Activated B cell treated with CpG ODN at 0.5 μM for 24 hours (primary cell): ENCODE measurements at regions of chr4 and their contacts with region 1.

Region 1: GRCh38 chr4:75653845-75654503 is 19.2 kb downstream of the G3BP2 start:
- DNase-seq: no peak
- ATAC-seq: no peak
- H3K4me3 Mint-ChIP-seq: no peak overlapping the region
- H3K27ac Mint-ChIP-seq: no peak overlapping the region
- H3K4me1 Mint-ChIP-seq: peaks cover 31% of the 10 kb centered on the region
- H3K27me3 Mint-ChIP-seq: no peaks in the 10 kb centered on the region
- CTCF ChIP-seq: no peak

Region 2: DNA sequence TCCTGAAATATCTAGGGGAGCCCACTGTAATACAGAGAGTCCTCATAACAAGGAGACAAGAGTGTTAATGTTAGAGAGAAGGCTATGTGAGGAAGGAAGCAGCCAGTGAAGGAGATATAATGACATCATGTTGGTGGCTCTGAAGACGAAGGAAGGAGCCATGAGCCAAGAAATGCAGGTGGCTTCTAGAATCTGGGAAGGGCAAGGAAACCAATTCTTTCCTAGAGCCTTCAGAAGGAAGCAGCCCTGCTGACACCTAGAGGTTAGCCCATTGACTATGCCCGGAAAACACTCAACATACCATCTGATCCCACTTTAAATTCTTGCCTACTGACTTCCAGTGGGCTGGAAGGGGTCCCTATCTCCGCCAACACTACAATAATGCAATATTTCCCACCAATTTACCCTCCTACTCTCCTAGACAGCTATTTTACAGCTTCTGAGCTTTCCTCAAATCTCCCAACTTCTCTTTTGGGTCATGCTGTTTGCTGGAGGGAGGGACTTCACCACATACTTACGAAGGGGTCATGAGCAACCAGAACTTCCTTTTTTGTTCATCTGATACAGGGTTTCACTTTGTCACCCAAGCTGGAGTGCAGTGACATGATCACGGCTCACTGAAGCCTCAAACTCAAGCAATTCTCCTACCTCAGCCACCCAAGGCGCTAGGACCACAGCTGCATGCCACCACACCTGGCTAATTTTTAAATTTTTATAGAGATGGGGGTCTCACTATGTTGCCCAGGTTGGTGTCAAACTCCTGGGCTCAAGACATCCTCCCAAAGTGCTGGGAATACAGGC is 44.4 kb after region 1 on chr4:
- CTCF ChIA-PET with region 1: no interaction called
- POLR2A ChIA-PET with region 1: no interaction called
- intact Hi-C with region 1: loop called (anchors 2 kb)
- DNase-seq: peak; percentile 21
- ATAC-seq: peak; percentile 96
- H3K4me3 Mint-ChIP-seq: peak overlapping the region; percentile 44
- H3K27ac Mint-ChIP-seq: peak overlapping the region; percentile 90
- H3K4me1 Mint-ChIP-seq: peaks cover 38% of the 10 kb centered on the region
- H3K27me3 Mint-ChIP-seq: no peaks in the 10 kb centered on the region
- CTCF ChIP-seq: no peak

Region 3: GRCh38 chr4:75708218-75708691 is 54.3 kb after region 1 on chr4:
- CTCF ChIA-PET with region 1: interaction called, 30 read pairs
- POLR2A ChIA-PET with region 1: no interaction called
- intact Hi-C with region 1: loop called (anchors 1 kb)
- DNase-seq: no peak
- ATAC-seq: peak; percentile 85
- H3K4me3 Mint-ChIP-seq: no peak overlapping the region
- H3K27ac Mint-ChIP-seq: peak overlapping the region; percentile 21
- H3K4me1 Mint-ChIP-seq: peaks cover 12% of the 10 kb centered on the region
- H3K27me3 Mint-ChIP-seq: no peaks in the 10 kb centered on the region
- CTCF ChIP-seq: no peak

Region 4: DNA sequence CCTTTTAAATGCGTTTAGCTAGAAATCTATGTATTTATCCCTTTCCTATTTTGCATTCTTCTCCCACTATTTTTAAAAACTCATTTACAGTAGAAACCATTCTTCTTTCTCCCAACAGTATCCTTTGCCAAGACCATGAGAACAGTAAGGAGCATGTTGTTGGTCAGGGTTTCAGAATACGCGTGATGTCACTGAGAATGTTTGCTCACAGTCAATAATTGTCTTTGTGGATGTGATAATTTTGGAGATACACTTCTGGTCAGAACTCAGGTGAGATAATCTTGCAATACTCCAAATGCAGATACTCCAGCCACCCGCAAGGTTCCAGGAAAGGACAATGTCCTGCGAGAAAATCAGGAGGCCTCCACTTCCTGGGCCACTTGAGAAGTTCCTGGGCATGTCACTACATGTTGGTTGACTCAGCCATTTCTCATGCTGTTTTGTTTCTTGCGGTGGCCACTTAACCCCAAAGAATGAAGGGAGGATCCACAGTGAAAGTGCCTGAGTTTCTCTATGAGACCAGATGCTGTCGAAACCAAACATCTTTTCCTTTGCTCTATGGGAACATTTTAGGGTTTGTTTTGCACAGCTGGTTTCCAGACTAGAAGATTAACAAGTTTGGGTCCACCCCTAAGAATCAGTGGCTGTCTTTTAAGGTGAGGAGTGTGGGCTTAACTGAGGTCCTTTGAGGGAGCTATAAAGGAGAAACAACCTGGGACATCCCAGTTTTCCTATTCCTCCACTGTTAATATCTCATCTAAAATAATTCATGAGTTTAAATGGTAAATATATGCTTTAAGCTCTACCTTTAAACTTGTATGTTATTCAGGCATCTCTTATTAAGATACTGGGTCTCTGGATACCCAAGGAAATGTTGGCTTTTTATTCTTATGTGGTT is 1128.0 kb after region 1 on chr4:
- CTCF ChIA-PET with region 1: no interaction called
- POLR2A ChIA-PET with region 1: no interaction called
- intact Hi-C with region 1: no loop called
- DNase-seq: no peak
- ATAC-seq: no peak
- H3K4me3 Mint-ChIP-seq: no peak overlapping the region
- H3K27ac Mint-ChIP-seq: no peak overlapping the region
- H3K4me1 Mint-ChIP-seq: no peaks in the 10 kb centered on the region
- H3K27me3 Mint-ChIP-seq: peaks cover 10% of the 10 kb centered on the region
- CTCF ChIP-seq: no peak